Endothelial cell of umbilical vein (primary cell): ENCODE measurements at regions of chr11 and their contacts with region 1.

Region 1: GRCh38 chr11:3841426-3842350 is 929 bp upstream of the RHOG start:
- DNase-seq: peak; percentile 91
- H3K4me3 ChIP-seq: peak overlapping the region; percentile 3 to 50 (median 31)
- H3K27ac ChIP-seq: peak overlapping the region; percentile 55
- H3K4me1 ChIP-seq: peaks cover 29% of the 10 kb centered on the region
- H3K27me3 ChIP-seq: no peaks in the 10 kb centered on the region
- CTCF ChIP-seq: peak; percentile 72 to 95
- POLR2A ChIP-seq: peak; percentile 18

Region 2: GRCh38 chr11:3797329-3798095 is 44.2 kb before region 1 on chr11 and contains the start of gene NUP98:
- CTCF ChIA-PET with region 1: interaction called, 6 read pairs
- POLR2A ChIA-PET with region 1: interaction called, 4 read pairs
- dilution Hi-C with region 1: no loop called
- intact Hi-C with region 1: loop called (anchors 1 kb)
- DNase-seq: peak; percentile 100
- H3K4me3 ChIP-seq: peak within 1 kb of the TSS; percentile 72 to 99 (median 90)
- H3K27ac ChIP-seq: peak within 1 kb of the TSS; percentile 76
- H3K4me1 ChIP-seq: peaks cover 15% of the 10 kb centered on the region
- H3K27me3 ChIP-seq: no peaks in the 10 kb centered on the region
- CTCF ChIP-seq: peak in 1 of 2 donors; percentile 2
- POLR2A ChIP-seq: peak; percentile 90
- total RNA-seq, gene NUP98: 80.8 and 92.7 TPM in 2 replicates

Region 3: GRCh38 chr11:3807909-3808860 is 33.5 kb before region 1 on chr11 and contains the start of gene PGAP2:
- CTCF ChIA-PET with region 1: interaction called, 48 read pairs
- POLR2A ChIA-PET with region 1: no interaction called
- dilution Hi-C with region 1: no loop called
- intact Hi-C with region 1: loop called (anchors 1 kb)
- DNase-seq: peak; percentile 57
- H3K4me3 ChIP-seq: peak within 1 kb of the TSS; percentile 62 to 93 (median 91)
- H3K27ac ChIP-seq: peak within 1 kb of the TSS; percentile 37
- H3K4me1 ChIP-seq: peaks cover 11% of the 10 kb centered on the region
- H3K27me3 ChIP-seq: no peaks in the 10 kb centered on the region
- CTCF ChIP-seq: peak; percentile 53 to 83
- POLR2A ChIP-seq: no peak
- total RNA-seq, gene PGAP2: 18.3 and 18.5 TPM in 2 replicates

Region 4: DNA sequence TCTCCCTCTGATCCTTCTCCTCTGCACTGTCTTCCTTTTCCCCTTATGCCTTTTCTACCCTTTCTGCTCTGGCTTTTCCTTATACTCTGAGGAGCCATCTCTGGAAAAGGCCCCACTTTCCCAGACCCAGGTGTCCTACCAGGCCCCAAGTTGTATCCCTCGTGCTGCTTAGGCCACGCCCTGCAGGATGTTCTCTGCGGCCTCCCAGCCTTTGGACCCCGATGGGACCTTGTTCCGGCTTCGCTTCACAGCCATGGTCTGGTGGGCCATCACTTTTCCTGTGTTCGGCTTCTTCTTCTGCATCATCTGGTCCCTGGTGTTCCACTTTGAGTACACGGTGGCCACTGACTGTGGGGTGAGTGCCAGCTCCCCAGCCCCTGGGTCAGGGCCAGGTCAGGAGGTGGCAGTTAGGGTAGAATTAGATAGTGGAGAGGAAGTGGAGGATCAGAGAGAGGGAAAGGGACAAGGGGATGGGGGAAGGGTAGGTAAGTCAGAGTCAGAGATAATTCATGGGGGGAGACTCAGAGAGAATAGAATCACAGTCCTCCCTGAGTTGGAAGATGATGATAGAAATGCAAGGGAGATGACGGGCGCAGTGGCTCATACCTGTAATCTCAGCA is 24.4 kb before region 1 on chr11:
- CTCF ChIA-PET with region 1: interaction called, 17 read pairs
- POLR2A ChIA-PET with region 1: no interaction called
- dilution Hi-C with region 1: no loop called
- intact Hi-C with region 1: no loop called
- DNase-seq: no peak
- H3K4me3 ChIP-seq: no peak overlapping the region
- H3K27ac ChIP-seq: no peak overlapping the region
- H3K4me1 ChIP-seq: no peaks in the 10 kb centered on the region
- H3K27me3 ChIP-seq: no peaks in the 10 kb centered on the region
- CTCF ChIP-seq: no peak
- POLR2A ChIP-seq: no peak

Region 5: DNA sequence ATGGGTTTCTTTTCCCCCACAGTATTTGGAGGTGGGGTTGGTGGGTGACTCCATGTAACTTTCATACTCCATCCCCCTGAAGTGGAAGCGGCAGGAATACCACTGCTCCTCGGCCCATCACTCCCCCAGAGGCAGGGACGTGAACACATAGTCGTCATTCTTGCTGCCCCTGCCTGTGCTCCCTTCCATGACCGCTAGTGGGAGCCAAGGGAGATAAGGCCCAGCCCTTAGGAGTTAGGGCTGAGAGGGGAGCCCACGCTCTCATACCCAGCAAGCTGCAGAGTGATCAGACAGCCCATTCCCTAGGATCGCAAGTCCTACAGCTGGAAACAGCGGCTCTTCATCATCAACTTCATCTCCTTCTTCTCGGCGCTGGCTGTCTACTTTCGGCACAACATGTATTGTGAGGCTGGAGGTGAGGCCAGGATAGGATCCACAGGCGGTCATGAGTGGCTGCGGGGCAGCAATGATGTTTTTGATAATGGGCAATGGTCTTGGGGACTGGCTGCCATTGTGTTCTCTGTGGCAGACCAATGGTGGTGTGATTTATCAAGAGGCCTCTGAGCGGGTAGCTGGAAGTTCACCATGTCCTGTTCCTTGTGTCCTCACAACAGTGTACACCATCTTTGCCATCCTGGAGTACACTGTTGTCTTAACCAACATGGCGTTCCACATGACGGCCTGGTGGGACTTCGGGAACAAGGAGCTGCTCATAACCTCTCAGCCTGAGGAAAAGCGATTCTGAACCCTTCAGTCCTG is 16.8 kb before region 1 on chr11:
- CTCF ChIA-PET with region 1: interaction called, 38 read pairs
- POLR2A ChIA-PET with region 1: no interaction called
- dilution Hi-C with region 1: no loop called
- intact Hi-C with region 1: loop called (anchors 1 kb)
- DNase-seq: peak; percentile 44
- H3K4me3 ChIP-seq: no peak overlapping the region
- H3K27ac ChIP-seq: no peak overlapping the region
- H3K4me1 ChIP-seq: no peaks in the 10 kb centered on the region
- H3K27me3 ChIP-seq: no peaks in the 10 kb centered on the region
- CTCF ChIP-seq: peak; percentile 74
- POLR2A ChIP-seq: no peak

Region 6: DNA sequence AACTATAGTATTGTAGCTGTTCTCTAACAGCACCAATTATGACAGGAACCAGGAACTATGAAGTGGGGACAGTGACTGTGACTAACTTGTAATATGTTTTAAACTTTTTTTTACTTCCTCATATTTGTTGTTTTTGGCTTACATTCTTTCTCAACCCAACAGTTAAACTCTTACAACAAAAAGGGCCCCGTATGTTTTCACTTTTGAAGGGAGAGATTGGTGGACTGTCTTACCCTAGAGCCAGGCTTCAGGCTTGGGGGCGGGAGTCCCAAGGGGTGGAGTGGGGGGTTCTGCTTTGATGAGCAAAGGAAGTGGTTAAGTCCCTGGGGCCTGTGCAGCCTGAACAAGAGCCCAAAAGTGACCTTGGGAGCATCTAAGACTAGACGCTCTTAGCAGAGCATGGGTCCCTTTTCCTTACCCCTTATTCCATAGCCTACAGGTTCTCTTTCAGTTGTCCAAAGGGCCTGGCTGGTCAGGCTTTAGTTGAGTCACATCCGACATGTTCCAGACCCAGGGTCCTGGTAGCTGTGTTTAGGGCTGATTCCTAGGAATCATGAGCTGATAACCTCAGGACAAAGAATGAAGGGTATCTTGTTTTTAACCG is 52.5 kb after region 1 on chr11:
- CTCF ChIA-PET with region 1: no interaction called
- POLR2A ChIA-PET with region 1: no interaction called
- dilution Hi-C with region 1: no loop called
- intact Hi-C with region 1: no loop called
- DNase-seq: peak; percentile 15
- H3K4me3 ChIP-seq: no peak overlapping the region
- H3K27ac ChIP-seq: no peak overlapping the region
- H3K4me1 ChIP-seq: peaks cover 5% of the 10 kb centered on the region
- H3K27me3 ChIP-seq: no peaks in the 10 kb centered on the region
- CTCF ChIP-seq: no peak
- POLR2A ChIP-seq: no peak

Region 7: GRCh38 chr11:4094348-4095291 is 252.9 kb after region 1 on chr11 and contains the start of gene RRM1:
- CTCF ChIA-PET with region 1: interaction called, 4 read pairs
- POLR2A ChIA-PET with region 1: no interaction called
- dilution Hi-C with region 1: no loop called
- intact Hi-C with region 1: loop called (anchors 1 kb)
- DNase-seq: peak; percentile 98
- H3K4me3 ChIP-seq: peak within 1 kb of the TSS; percentile 42 to 91 (median 87)
- H3K27ac ChIP-seq: peak within 1 kb of the TSS; percentile 66
- H3K4me1 ChIP-seq: peaks cover 11% of the 10 kb centered on the region
- H3K27me3 ChIP-seq: no peaks in the 10 kb centered on the region
- CTCF ChIP-seq: no peak
- POLR2A ChIP-seq: peak; percentile 90
- total RNA-seq, gene RRM1: 109 and 112 TPM in 2 replicates